Ascending aorta (tissue), 2 donors: ENCODE measurements at regions of chr18 and their contacts with region 1.

Region 1: GRCh38 chr18:9808295-9809241 is 77.2 kb upstream of the TXNDC2 start:
- DNase-seq: peak in 1 of 2 donors; percentile 81
- H3K4me3 ChIP-seq: peak overlapping the region; percentile 15 to 32
- H3K27ac ChIP-seq: peak overlapping the region; percentile 73 to 75
- H3K4me1 ChIP-seq: peaks cover 13 to 45% of the 10 kb centered on the region in 2 donors
- H3K27me3 ChIP-seq: no peaks in the 10 kb centered on the region
- CTCF ChIP-seq: no peak

Region 2: DNA sequence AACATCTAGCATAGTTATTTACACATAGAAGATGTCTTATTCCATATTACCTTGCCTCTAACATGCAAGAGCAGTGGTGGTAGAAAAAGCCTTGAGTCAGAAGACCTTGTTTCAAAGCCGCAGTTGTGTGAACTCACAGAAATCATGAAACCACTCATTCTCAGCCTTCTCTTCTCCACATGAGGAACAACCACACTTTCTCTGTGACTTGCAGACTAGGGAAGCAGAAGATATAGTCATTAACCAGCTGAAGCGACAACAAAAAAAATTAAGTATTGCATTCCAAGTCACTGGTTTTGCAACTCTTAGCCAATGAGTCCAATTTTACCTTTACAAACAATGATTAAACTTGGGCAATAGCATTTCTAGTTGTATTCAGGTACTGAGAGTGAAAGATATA is 455.0 kb before region 1 on chr18:
- intact Hi-C with region 1: loop called (anchors 5 kb)
- DNase-seq: no peak
- H3K4me3 ChIP-seq: no peak overlapping the region
- H3K27ac ChIP-seq: peak overlapping the region; percentile 70 to 79
- H3K4me1 ChIP-seq: peaks cover 0 to 33% of the 10 kb centered on the region in 2 donors
- H3K27me3 ChIP-seq: no peaks in the 10 kb centered on the region
- CTCF ChIP-seq: no peak

Region 3: DNA sequence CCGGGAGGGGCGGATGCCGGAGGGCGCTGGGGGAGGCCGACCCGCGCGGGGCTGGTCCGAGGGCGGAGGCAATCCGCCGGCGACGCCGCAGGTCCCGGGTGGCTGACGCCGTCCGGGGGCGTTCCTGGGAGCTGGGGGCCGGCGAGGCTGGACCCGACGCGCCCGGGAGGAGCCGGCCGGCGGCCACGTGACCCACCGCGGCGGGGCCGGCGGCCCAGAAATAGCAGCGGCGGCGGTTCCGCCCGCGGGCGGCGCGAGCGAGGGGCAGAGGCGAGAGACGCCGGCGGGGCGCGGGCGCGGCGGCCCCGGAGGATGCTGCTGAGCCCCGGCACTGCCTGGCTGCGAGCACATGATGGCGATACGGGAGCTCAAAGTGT is 100.5 kb before region 1 on chr18 and contains the start of gene RAB31:
- intact Hi-C with region 1: loop called (anchors 5 kb)
- DNase-seq: peak; percentile 70 to 92
- H3K4me3 ChIP-seq: peak within 1 kb of the TSS; percentile 78 to 81
- H3K27ac ChIP-seq: peak within 1 kb of the TSS; percentile 89 to 99
- H3K4me1 ChIP-seq: peaks cover 0 to 33% of the 10 kb centered on the region in 2 donors
- H3K27me3 ChIP-seq: no peaks in the 10 kb centered on the region
- CTCF ChIP-seq: no peak
- total RNA-seq, gene RAB31: 36.8 TPM

Region 4: GRCh38 chr18:9771261-9771976 is 37.1 kb before region 1 on chr18:
- intact Hi-C with region 1: no loop called
- DNase-seq: peak; percentile 39 to 92
- H3K4me3 ChIP-seq: no peak overlapping the region
- H3K27ac ChIP-seq: peak overlapping the region in 1 of 2 donors; percentile 35
- H3K4me1 ChIP-seq: peaks cover 0 to 5% of the 10 kb centered on the region in 2 donors
- H3K27me3 ChIP-seq: no peaks in the 10 kb centered on the region
- CTCF ChIP-seq: peak; percentile 94 to 99 (median 98)

Region 5: DNA sequence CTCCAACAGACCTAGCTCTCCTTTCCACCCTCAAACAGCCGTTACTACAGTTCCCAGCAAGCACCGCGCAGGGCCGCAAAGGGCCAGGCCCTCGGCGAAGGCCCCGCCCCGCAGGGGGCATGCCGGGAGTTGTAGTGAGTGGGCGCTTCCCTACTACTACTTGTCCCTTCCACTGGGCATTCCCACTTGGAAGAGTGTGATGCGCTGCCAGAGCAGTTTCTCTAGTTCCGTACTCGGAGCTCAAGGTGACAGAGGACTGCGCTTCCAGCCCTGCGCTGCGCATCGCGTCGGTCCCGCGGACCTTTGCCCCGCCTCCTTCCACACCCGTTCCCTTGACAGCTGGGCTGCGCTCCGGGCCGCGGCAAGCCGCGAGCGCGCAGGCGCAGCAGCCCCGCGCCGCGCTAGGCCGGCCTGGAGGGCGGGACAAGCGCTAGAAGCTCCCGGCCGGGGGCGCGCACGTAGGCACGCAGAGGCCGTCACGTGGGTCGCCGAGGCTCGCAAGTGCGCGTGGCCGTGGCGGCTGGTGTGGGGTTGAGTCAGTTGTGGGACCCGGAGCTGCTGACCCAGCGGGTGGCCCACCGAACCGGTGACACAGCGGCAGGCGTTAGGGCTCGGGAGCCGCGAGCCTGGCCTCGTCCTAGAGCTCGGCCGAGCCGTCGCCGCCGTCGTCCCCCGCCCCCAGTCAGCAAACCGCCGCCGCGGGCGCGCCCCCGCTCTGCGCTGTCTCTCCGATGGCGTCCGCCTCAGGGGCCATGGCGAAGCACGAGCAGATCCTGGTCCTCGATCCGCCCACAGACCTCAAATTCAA is 105.2 kb after region 1 on chr18 and contains the start of gene VAPA:
- intact Hi-C with region 1: loop called (anchors 2 kb)
- DNase-seq: peak; percentile 85 to 97
- H3K4me3 ChIP-seq: peak within 1 kb of the TSS; percentile 96 to 97
- H3K27ac ChIP-seq: peak within 1 kb of the TSS; percentile 99 to 100
- H3K4me1 ChIP-seq: peaks cover 3 to 21% of the 10 kb centered on the region in 2 donors
- H3K27me3 ChIP-seq: no peaks in the 10 kb centered on the region
- CTCF ChIP-seq: no peak
- total RNA-seq, gene VAPA: 109 TPM

Region 6: DNA sequence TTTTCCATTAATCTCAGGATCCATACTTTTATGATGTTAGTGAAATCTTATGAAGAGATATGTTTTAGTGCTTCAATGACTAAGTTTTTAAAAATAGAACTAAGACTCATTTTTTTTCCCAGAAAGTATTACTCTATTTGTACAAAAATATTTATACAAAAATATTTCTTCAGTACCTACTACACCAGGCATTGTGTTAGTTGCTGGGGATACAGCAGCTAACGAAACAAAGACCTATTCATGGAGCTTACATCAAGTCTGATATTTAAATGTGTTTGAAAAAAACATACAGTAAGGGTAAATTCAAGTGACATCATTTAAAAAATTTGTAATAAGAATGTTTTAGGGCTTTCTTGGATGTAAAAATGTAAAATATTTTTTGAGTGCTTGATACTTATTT is 116.8 kb after region 1 on chr18:
- intact Hi-C with region 1: no loop called
- DNase-seq: no peak
- H3K4me3 ChIP-seq: peak overlapping the region; percentile 2 to 27
- H3K27ac ChIP-seq: peak overlapping the region; percentile 64 to 80
- H3K4me1 ChIP-seq: peaks cover 0 to 61% of the 10 kb centered on the region in 2 donors
- H3K27me3 ChIP-seq: no peaks in the 10 kb centered on the region
- CTCF ChIP-seq: no peak

Region 7: DNA sequence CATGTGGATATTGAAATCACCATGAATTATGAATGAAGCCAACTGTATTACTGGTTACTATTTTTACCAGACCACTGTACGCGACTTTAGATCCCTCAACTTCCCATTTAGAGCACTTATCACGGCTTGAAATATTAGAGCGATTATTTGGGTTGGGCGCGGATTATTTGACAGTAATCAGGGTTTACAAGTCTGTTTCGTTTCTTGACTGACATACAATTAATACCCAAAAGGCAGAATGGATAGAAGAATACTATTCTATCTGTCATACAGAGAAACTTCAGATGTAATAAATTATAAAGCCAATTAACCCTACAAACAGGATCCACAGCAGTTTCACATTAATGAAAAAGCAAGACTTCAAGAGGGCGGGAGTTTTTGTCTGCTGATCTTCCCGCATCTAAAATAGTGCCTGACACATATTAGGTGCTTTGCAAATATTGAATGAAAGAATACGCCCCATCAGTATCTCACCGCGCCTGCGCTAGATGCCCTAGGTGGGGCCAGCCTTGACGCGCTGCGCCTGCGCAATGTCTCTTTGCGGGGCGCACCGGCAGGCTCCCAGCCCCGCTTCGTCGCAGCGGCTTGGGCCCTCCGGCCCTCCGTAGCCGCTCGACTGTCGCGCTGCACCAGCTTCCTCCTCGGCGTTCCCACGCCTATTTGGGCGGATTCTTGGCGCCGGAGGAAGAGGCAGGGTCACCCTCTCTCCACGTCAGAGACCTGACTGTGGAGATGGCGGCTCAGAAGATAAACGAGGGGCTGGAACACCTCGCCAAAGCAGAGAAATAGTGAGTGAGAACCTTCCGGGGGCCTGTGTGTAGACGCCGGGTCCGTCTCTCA is 717.0 kb after region 1 on chr18 and contains the start of gene NAPG:
- intact Hi-C with region 1: loop called (anchors 10 kb)
- DNase-seq: peak; percentile 63 to 94
- H3K4me3 ChIP-seq: peak within 1 kb of the TSS; percentile 74 to 80
- H3K27ac ChIP-seq: peak within 1 kb of the TSS; percentile 89 to 90
- H3K4me1 ChIP-seq: peaks cover 0 to 7% of the 10 kb centered on the region in 2 donors
- H3K27me3 ChIP-seq: no peaks in the 10 kb centered on the region
- CTCF ChIP-seq: no peak
- total RNA-seq, gene NAPG: 31.1 TPM

Region 8: GRCh38 chr18:11040823-11041656 is 1232.5 kb after region 1 on chr18:
- intact Hi-C with region 1: no loop called
- DNase-seq: no peak
- H3K4me3 ChIP-seq: no peak overlapping the region
- H3K27ac ChIP-seq: no peak overlapping the region
- H3K4me1 ChIP-seq: no peaks in the 10 kb centered on the region
- H3K27me3 ChIP-seq: no peaks in the 10 kb centered on the region
- CTCF ChIP-seq: peak; percentile 34 to 69 (median 58)